PC-9 (cell line): ENCODE measurements at regions of chr3 and their contacts with region 1.

Region 1: GRCh38 chr3:47282424-47283192 is at the starts of genes KIF9 and KLHL18:
- DNase-seq: peak; percentile 83 to 90
- H3K4me3 ChIP-seq: peak within 1 kb of the TSS; percentile 86
- H3K27ac ChIP-seq: peak within 1 kb of the TSS; percentile 87
- H3K4me1 ChIP-seq: peaks cover 7% of the 10 kb centered on the region
- H3K27me3 ChIP-seq: no peaks in the 10 kb centered on the region
- CTCF ChIP-seq: no peak
- total RNA-seq, gene KIF9: 18.4 and 21.4 TPM in 2 replicates
- total RNA-seq, gene KLHL18: 16.0 and 21.9 TPM in 2 replicates

Region 2: DNA sequence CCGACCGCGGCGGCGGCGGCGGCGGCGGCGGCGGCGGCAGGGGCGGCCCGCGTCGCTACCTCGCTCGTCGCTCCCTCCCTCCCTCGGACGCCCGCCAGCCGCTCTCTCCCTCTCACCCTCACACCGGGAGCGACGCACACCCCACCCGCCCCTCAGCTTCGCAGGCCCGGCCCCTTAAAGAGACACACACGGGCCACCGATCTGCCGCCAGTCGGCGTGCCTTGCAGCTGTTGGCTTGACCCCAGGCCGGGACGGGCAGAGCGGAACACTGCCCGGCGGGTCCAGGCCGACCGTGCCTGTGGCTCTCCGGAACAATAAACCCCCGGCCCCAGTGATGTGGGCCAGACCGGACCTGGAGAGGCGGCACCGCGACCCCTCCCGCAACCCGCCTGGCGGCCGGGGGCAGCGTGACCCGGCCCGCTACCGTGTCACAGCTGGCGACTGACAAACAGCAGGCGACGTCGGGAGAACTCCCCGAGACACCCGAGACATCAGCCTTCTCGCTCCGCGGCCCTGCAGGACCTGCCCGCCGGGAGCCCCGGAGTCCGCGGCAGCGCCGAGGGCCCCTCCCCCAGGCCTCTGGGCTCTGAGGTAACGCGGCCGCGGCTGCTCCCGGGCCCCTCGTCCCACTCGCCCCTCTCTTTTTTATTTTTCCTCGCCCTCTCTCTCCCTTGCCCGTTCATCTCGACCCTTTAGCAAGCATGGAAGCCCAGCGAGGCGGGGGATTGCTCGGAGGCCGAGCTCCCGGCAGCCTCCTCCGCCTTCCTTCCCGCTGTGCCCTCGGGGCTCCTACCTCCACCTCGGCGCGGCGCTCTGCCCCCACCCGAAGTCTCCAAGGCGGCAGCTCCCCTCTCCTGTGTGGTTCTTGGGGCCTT is 118.4 kb before region 1 on chr3 and contains the start of gene SETD2:
- CTCF ChIA-PET with region 1: no interaction called
- POLR2A ChIA-PET with region 1: no interaction called
- intact Hi-C with region 1: loop called (anchors 1 kb)
- DNase-seq: peak; percentile 74 to 88
- H3K4me3 ChIP-seq: peak within 1 kb of the TSS; percentile 71
- H3K27ac ChIP-seq: peak within 1 kb of the TSS; percentile 47
- H3K4me1 ChIP-seq: peaks cover 28% of the 10 kb centered on the region
- H3K27me3 ChIP-seq: no peaks in the 10 kb centered on the region
- CTCF ChIP-seq: no peak
- total RNA-seq, gene SETD2: 37.0 and 47.7 TPM in 2 replicates